Dorsolateral prefrontal cortex (tissue), 120 donors: ENCODE measurements at regions of chr1 and their contacts with region 1.

Region 1: DNA sequence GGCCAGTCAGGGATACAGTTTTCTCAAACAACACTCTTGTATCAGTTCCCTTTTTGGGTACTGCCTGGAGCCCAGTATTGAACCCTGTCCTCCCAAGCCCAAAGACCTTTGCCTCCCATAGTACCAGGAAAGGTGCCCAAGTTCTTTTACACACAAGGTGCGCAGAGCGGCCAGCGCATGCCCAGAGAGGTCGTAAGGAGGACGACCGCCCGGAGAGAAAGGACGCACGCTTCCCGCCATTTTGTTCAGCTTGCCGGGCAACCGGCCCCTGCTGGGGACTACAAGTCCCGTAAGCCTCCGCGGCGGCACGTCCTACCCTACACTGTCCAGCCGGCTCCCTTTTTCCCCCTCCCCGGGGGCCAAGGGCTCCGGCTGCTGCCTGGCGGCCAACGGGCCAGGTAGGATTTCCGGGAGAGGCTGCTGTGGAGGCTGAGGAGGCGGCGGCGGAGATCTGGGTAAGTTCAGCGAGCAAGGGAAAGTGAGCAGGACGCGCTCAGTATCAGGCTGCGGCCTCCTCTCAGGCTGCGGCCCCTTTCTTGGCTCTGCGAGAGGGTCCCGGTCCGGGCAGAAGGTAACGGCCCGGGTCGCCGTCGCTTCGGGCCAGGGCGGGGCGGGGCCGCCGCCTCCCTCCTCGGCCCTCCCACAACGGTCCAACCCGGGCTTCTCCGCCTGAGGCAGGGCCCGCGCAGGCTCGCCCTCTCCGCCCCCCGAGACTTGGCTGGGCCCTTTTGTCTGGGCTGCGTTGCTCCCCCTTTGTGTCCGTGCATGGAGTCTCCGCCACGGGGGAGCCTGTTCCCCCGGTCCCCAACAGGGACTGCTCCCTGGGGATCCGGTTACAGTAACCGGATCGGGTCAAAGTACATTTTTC is at the start of gene PHACTR4:
- DNase-seq: peak; percentile 84 to 94 (median 92)
- H3K4me3 ChIP-seq: peak within 1 kb of the TSS; percentile 62 to 99 (median 92)
- H3K27ac ChIP-seq: peak within 1 kb of the TSS; percentile 55 to 97 (median 91)
- H3K27me3 ChIP-seq: no peaks in the 10 kb centered on the region
- CTCF ChIP-seq: peak in 27 of 56 donors; percentile 6 to 49 (median 25)
- total RNA-seq, gene PHACTR4: 15.7 to 44.9 (median 26.5) TPM

Region 2: DNA sequence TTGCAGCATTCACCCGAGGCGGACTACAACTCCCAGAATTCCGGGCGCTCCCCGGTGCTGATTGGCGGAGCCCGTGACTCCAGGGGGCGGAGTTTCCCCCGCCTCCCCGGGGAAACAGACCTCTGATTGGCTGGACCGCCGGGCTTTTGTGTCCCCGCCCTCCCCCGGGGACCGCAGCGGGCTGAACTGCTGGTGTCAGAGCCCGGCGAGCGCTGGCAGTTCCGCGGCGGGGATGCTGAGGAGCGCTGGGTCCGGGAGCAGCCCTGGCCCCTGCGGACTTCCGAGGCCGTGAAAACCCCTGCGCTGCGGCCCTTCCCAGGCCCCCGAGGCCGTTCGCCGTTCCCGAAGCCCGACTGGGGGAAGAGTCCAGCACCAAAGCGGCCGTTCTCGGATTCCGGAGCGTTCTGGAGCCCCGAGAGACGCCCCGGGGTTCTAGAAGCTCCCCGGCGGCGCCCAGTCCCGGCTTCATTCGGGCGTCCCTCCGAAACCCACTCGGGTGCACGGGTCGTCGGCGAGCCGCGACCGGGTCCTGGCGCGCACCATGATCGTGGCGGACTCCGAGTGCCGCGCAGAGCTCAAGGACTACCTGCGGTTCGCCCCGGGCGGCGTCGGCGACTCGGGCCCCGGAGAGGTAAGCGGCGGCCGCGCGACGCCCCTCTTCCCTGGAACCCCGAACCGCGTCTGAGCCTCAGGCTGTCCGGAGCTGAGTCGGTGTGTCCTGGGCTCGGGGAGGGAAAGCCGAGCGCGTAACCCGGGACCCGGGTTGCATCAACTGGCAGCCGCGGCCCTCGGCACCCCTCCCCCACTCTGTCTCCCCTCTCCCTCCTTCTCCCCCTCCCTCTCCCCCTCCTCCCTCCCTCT is 110.1 kb before region 1 on chr1 and contains the start of gene SESN2:
- intact Hi-C with region 1: loop called in 1 of 2 experiments (anchors 5 kb)
- DNase-seq: peak; percentile 99 to 100 (median 99)
- H3K4me3 ChIP-seq: peak within 1 kb of the TSS; percentile 68 to 100 (median 95)
- H3K27ac ChIP-seq: peak within 1 kb of the TSS in 55 of 59 donors; percentile 41 to 94 (median 82)
- H3K27me3 ChIP-seq: no peaks in the 10 kb centered on the region
- CTCF ChIP-seq: peak in 35 of 56 donors; percentile 10 to 64 (median 31)
- total RNA-seq, gene SESN2: 6.5 to 26.1 (median 11.8) TPM

Region 3: DNA sequence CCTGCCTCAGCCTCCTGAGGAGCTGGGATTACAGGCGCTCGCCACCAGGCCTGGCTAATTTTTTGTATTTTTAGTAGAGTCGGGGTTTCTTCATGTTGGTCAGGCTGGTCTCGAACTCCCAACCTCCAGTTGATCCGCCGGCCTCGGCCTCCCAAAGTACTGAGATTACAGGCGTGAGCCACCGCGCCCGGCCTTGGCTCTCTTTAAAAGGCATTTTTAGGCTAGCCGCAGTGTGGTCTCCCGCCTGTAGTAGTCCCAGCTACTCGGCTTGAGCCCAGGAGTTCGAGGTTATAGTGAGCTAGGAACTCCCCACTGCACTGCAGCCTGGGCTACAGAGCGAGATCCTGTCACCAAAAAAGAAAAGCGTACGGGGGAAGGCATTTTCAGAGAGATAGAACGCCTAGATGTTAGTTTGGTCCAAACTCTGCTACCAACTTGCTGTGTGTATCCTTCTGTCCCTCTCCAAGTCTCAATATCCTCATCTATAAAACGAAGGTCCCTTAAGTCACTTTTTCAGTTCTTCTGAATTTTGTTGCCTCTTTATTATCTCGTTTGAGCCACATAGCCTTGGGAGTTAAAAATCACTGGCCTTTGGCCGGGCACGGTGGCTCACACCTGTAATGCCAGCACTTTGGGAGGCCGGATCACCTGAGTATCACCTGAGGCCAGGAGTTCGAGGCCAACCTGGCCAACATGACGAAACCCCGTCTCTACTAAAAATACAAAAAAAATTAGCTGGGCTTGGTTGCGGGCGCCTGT is 40.0 kb before region 1 on chr1:
- intact Hi-C with region 1: loop called (anchors 2 to 5 kb)
- DNase-seq: peak in 3 of 10 donors; percentile 10 to 44 (median 32)
- H3K4me3 ChIP-seq: peak overlapping the region; percentile 53 to 91 (median 76)
- H3K27ac ChIP-seq: peak overlapping the region; percentile 17 to 94 (median 88)
- H3K27me3 ChIP-seq: no peaks in the 10 kb centered on the region
- CTCF ChIP-seq: no peak

Region 4: GRCh38 chr1:28409090-28409489 is 39.5 kb after region 1 on chr1:
- intact Hi-C with region 1: loop called in 1 of 2 experiments (anchors 5 kb)
- DNase-seq: no peak
- H3K4me3 ChIP-seq: no peak overlapping the region
- H3K27ac ChIP-seq: peak overlapping the region in 1 of 59 donors; percentile 16
- H3K27me3 ChIP-seq: no peaks in the 10 kb centered on the region
- CTCF ChIP-seq: no peak

Region 5: DNA sequence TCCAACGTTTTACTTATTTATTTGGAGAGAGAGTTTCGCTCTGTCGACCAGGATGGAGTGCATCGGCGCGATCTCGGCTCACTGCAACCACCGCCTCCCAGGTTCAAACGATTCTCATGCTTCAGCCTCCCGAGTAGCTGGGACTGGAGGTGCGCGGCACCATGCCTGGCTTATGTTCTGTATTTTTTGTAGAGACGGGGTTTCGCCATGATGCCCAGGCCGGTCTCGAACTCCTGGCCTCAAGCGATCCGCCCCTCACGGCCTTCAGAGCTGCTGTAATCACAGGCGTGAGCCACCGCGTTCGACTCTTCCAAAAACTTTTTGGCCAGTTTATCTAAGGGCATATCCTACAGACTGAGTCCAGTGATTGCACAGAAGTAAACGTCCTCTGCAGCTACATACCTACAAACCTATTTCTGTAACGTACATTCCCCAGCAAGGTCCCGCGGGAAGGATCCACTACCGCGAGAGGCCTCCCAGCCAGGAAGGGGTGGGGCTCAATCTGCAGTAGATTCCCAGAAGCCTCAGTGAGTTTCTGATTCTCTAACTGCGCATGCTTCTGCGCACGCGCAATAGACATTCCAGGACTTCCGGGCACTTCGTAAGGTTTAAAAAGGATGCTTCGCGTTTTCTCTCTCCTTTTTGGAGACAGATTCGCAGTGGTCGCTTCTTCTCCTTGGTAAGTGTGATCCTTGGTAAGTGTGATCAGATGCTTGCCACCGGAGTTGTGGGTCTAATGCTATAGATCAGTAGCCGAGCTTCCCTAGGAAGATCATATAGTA is 136.0 kb after region 1 on chr1 and contains the start of gene RCC1:
- intact Hi-C with region 1: loop called in 1 of 2 experiments (anchors 5 kb)
- DNase-seq: peak; percentile 86 to 96 (median 93)
- H3K4me3 ChIP-seq: peak within 1 kb of the TSS; percentile 61 to 98 (median 85)
- H3K27ac ChIP-seq: peak within 1 kb of the TSS; percentile 40 to 96 (median 87)
- H3K27me3 ChIP-seq: no peaks in the 10 kb centered on the region
- CTCF ChIP-seq: peak in 36 of 56 donors; percentile 2 to 58 (median 34)
- total RNA-seq, gene RCC1: 3.3 to 22.5 (median 7.0) TPM

Region 6: DNA sequence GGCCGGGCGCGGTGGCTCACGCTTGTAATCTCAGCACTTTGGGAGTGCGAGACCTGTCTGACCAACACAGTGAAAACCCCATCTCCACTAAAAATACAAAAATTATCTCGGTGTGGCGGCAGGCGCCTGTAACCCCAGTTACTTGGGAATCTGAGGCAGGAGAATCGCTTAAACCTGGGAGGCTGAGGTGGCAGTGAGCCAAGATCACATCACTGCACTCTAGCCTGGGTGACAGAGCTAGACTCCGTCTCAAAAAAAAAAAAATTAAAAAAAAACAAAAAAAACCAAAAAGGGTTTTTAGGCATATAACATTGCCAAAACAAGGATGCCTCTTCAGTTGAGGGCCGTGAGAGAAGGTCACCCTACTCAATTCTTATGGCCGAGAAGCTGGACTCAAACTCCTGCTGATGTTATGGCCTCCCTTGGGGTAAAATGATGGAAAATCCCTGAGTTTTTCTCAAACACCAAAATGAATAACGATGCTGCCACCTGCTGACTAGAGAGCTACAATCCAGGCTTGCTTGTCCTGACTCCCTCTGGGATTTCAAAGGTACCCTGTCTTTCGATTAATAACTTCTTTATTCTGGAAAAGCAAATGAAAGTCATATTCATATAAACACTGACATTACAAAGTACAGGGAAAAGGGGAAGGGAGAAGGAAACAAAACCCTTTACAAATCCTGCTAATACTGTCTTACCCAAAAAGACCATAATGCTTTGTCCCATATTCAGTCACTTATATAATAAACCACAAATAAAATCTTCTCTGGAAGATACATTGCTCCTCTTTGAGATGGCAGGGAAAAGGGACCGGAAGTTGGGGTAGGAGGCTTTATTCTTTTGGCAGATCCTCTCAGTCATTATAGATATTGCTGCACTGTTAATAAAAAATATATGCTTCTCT is 233.2 kb after region 1 on chr1:
- intact Hi-C with region 1: loop called in 1 of 2 experiments (anchors 10 kb)
- DNase-seq: peak in 6 of 10 donors; percentile 52 to 87 (median 60)
- H3K4me3 ChIP-seq: peak overlapping the region in 4 of 59 donors; percentile 7 to 14 (median 12)
- H3K27ac ChIP-seq: peak overlapping the region in 58 of 59 donors; percentile 2 to 96 (median 70)
- H3K27me3 ChIP-seq: no peaks in the 10 kb centered on the region
- CTCF ChIP-seq: peak; percentile 38 to 95 (median 83)